ENCODE measurements at regions of chr6 and their contacts with region 1.

Region 1: DNA sequence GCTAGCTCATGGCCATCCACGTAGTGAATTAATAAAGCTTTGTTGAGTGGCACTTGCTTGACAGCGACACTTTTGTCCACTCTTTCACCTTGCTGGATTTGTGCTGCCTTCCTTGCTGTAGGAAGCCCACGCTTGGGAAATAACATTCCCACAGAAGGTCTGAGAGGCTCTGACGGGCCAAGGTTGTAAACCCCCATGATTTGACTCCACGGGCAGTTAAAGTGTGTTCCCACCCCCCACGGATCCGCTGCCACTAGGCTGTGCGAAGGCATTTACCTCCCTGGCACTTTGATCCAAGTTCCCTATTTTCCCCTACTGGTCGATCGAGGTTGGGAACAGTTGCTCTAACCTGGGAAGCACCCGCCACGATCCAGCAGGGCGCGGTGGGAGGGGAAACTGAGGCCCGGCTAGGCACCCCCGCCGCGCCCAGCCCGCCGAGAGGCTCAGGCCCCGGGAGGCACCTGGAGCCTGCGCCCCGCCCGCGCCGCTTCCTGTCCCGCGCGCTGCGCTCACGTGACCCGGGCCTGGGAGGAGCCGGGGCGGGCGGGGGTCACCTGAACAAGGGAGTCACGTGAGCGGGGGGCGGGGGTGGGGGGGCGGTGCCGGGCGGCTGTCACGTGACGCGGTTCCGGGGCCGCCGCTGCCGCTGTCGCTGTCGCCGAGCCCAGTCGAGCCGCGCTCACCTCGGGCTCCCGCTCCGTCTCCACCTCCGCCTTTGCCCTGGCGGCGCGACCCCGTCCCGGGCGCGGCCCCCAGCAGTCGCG is at the start of gene IGF2R:
- DNase-seq: peak; percentile 97
- ATAC-seq: peak; percentile 91
- H3K4me3 Mint-ChIP-seq: peak within 1 kb of the TSS; percentile 93
- H3K27ac Mint-ChIP-seq: peak within 1 kb of the TSS; percentile 92
- H3K4me1 Mint-ChIP-seq: peaks cover 38% of the 10 kb centered on the region
- H3K27me3 Mint-ChIP-seq: no peaks in the 10 kb centered on the region
- total RNA-seq, gene IGF2R: 55.6 to 65.6 TPM

Region 2: GRCh38 chr6:159761873-159762680 is 206.5 kb before region 1 on chr6 and contains the start of gene ACAT2:
- CTCF ChIA-PET with region 1: no interaction called
- POLR2A ChIA-PET with region 1: no interaction called
- intact Hi-C with region 1: loop called in 1 of 2 experiments (anchors 1 kb)
- DNase-seq: peak; percentile 96
- ATAC-seq: peak; percentile 97
- H3K4me3 Mint-ChIP-seq: peak within 1 kb of the TSS; percentile 95
- H3K27ac Mint-ChIP-seq: peak within 1 kb of the TSS; percentile 95
- H3K4me1 Mint-ChIP-seq: peaks cover 27% of the 10 kb centered on the region
- H3K27me3 Mint-ChIP-seq: no peaks in the 10 kb centered on the region
- total RNA-seq, gene ACAT2: 55.0 to 82.1 TPM

Region 3: GRCh38 chr6:159797554-159797953 is 171.1 kb before region 1 on chr6:
- CTCF ChIA-PET with region 1: no interaction called
- POLR2A ChIA-PET with region 1: no interaction called
- intact Hi-C with region 1: no loop called
- DNase-seq: no peak
- ATAC-seq: peak; percentile 64
- H3K4me3 Mint-ChIP-seq: no peak overlapping the region
- H3K27ac Mint-ChIP-seq: peak overlapping the region; percentile 45
- H3K4me1 Mint-ChIP-seq: peaks cover 43% of the 10 kb centered on the region
- H3K27me3 Mint-ChIP-seq: no peaks in the 10 kb centered on the region

Region 4: DNA sequence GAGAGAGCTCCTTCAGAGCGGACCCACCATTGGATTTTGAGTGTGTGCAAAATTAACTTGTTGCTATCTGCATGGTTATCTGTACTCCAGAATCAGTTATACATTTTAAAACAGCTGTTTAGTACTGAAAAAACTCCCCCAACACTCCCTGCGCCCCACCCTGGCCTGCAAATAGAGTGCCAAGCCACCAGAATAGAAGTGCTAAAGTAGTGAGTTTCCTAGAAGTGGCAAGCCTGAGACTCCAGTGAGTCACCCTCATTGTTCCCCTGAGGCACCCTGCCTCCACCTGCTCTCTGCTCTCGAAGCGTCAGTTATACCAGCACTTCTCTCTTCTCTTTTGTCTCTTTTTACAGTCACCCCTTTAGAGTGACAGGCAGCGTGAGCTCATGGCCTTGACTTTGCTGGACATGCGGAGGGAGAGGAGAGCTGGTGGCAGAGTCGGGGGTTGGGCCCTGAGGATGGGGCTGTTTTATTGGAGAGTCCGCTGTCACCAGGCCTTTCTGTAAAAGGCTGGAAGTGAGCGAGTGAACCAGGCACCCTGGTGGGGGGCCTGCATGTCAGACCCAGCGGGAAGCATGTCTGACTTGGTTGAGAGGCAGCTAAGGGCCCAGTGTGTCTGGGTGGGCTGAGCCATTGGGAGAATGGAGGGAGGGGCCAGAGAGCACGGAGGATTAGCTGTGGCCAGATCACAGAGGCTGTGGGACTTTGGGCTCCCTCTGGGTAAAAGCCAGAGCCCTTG is 10.7 kb after region 1 on chr6:
- CTCF ChIA-PET with region 1: interaction called, 6 read pairs
- POLR2A ChIA-PET with region 1: interaction called, 4 read pairs
- intact Hi-C with region 1: loop called (anchors 1 kb)
- DNase-seq: peak; percentile 82
- ATAC-seq: peak; percentile 83
- H3K4me3 Mint-ChIP-seq: peak overlapping the region; percentile 74
- H3K27ac Mint-ChIP-seq: peak overlapping the region; percentile 99
- H3K4me1 Mint-ChIP-seq: peaks cover 96% of the 10 kb centered on the region
- H3K27me3 Mint-ChIP-seq: no peaks in the 10 kb centered on the region

Region 5: DNA sequence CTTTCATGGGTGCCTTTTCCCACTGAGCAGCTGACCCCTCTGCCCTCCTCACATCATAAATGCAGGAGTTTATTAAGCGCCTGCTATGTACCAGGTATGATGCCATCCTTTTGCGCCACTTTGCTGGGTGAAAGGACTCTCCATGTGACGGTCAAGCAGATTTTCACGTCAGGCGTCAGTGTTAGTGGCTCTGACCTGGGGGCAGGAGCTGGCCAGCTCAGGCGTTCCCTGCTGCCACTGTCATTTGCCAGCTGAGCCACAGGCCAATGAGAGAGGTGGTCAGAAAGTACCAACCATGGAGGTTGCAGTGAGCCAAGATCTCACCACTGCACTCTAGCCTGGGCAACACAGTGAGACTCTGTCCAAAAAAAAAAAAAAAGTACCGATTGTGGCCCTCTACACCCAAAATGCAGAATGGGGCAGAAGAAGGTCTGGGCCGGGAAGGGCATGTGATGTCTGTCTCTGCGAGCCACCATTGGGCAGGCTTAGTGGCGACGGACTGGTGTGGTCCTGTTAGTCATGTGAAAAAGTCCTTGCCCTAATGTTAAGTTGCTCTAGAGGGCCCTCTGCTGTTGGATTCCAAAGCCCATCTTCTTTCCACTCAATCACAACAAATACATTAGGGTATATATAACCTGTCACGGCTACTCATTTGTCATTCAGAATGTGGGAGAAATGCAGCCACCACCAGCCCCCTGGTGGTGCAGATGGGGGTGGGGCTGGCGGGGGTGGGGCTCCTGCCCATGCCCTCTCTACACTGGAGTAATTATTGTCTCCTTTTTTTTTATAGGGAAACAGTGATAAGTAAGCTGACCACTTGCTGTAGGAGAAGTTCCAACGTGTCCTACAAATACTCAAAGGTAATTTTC is 134.6 kb after region 1 on chr6:
- CTCF ChIA-PET with region 1: no interaction called
- POLR2A ChIA-PET with region 1: no interaction called
- intact Hi-C with region 1: loop called in 1 of 2 experiments (anchors 1 kb)
- DNase-seq: peak; percentile 51
- ATAC-seq: peak; percentile 60
- H3K4me3 Mint-ChIP-seq: no peak overlapping the region
- H3K27ac Mint-ChIP-seq: no peak overlapping the region
- H3K4me1 Mint-ChIP-seq: peaks cover 12% of the 10 kb centered on the region
- H3K27me3 Mint-ChIP-seq: no peaks in the 10 kb centered on the region